H1 (cell line): ENCODE measurements at regions of chr14 and their contacts with region 1.

Region 1: DNA sequence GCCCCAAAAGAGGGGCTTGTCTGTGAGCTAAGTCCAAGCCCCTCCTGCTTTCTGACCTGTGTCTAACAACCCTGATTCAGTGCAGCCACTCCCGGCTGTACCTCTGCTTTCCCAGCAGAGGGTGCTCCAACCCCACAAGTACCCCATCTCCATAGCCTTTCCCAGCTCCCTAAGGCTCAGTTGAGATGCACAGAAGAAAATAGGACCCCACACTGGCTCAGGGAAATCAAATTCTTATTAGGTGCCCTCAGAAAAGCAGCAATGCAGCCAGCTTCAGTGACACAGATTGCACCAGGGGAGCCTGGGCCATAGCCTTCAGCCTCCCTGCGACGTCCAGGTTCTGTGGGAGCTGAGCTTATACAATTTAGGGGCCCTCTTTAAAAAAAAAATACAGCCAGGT is 49.9 kb downstream of the LRRC74A start:
- DNase-seq: peak; percentile 23 to 76
- H3K4me3 ChIP-seq: no peak overlapping the region
- H3K27ac ChIP-seq: no peak overlapping the region
- H3K4me1 ChIP-seq: peaks cover 0 to 3% (median 0%) of the 10 kb centered on the region in 4 experiments; a peak in 1 of 7 replicates
- H3K27me3 ChIP-seq: no peaks in the 10 kb centered on the region; a peak in 2 of 7 replicates
- CTCF ChIP-seq: peak; percentile 97
- EP300 ChIP-seq: no peak
- POLR2A ChIP-seq: no peak
- RAD21 ChIP-seq: peak; percentile 100

Region 2: DNA sequence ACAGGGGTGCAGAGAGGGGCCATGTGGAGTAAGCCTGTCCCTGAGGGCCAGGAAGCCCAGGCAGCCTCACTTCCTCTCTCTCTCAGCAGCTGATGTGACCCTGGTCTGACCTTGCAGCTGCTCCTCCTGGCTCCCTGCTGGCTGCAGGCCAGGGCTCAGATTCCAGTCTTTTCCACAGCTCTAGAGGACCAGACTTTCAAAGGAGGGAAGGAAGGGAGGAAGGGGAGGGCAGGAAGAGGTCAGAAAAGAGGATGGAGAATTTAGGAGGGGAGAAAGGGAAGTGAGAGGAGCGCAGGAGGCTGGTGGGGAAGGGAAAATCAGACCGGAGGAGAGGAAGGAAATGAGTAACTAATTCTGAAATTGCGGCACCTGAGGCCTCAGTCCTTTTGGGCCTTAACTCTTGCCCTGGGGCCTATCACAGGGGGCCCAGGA is 155.7 kb before region 1 on chr14:
- CTCF ChIA-PET with region 1: no interaction called
- POLR2A ChIA-PET with region 1: no interaction called
- DNase-seq: no peak
- H3K4me3 ChIP-seq: no peak overlapping the region
- H3K27ac ChIP-seq: no peak overlapping the region
- H3K4me1 ChIP-seq: peaks cover 0 to 8% (median 3%) of the 10 kb centered on the region in 4 experiments; a peak in 3 of 7 replicates
- H3K27me3 ChIP-seq: no peaks in the 10 kb centered on the region
- CTCF ChIP-seq: no peak
- EP300 ChIP-seq: no peak
- POLR2A ChIP-seq: no peak
- RAD21 ChIP-seq: no peak

Region 3: GRCh38 chr14:76904740-76905438 is 28.8 kb after region 1 on chr14:
- CTCF ChIA-PET with region 1: interaction called, 424 read pairs
- POLR2A ChIA-PET with region 1: interaction called, 3 read pairs
- DNase-seq: no peak
- H3K4me3 ChIP-seq: no peak overlapping the region
- H3K27ac ChIP-seq: no peak overlapping the region
- H3K4me1 ChIP-seq: peaks cover 0 to 3% (median 1%) of the 10 kb centered on the region in 4 experiments; a peak in 1 of 7 replicates
- H3K27me3 ChIP-seq: no peaks in the 10 kb centered on the region
- CTCF ChIP-seq: no peak
- EP300 ChIP-seq: no peak
- POLR2A ChIP-seq: no peak
- RAD21 ChIP-seq: no peak

Region 4: GRCh38 chr14:76968621-76969063 is 92.6 kb after region 1 on chr14:
- CTCF ChIA-PET with region 1: interaction called, 15 read pairs
- POLR2A ChIA-PET with region 1: no interaction called
- DNase-seq: no peak
- H3K4me3 ChIP-seq: no peak overlapping the region
- H3K27ac ChIP-seq: peak overlapping the region; percentile 56; the same call in 1 of the 2 replicates
- H3K4me1 ChIP-seq: peaks cover 0 to 33% (median 17%) of the 10 kb centered on the region in 4 experiments; a peak in 6 of 7 replicates
- H3K27me3 ChIP-seq: no peaks in the 10 kb centered on the region
- CTCF ChIP-seq: peak in 2 of 3 experiments; percentile 23 to 25; a peak in 2 of 4 replicates
- EP300 ChIP-seq: no peak
- POLR2A ChIP-seq: no peak
- RAD21 ChIP-seq: peak; percentile 26 to 41; a peak in 3 of 4 replicates

Region 5: GRCh38 chr14:77028384-77029231 is 152.5 kb after region 1 on chr14 and contains the start of gene IRF2BPL:
- CTCF ChIA-PET with region 1: interaction called, 13 read pairs
- POLR2A ChIA-PET with region 1: interaction called, 4 read pairs
- DNase-seq: peak in 1 of 2 experiments; percentile 88
- H3K4me3 ChIP-seq: peak within 1 kb of the TSS; percentile 61 to 86 (median 70)
- H3K27ac ChIP-seq: peak within 1 kb of the TSS; percentile 91
- H3K4me1 ChIP-seq: peaks cover 6 to 40% (median 27%) of the 10 kb centered on the region in 4 experiments
- H3K27me3 ChIP-seq: peaks cover 0 to 5% (median 3%) of the 10 kb centered on the region in 4 experiments; a peak in 5 of 7 replicates
- CTCF ChIP-seq: no peak
- EP300 ChIP-seq: 0 out of 3 replicates have a peak, but pooled peaks of 1 of the 2 experiments have one; percentile 42
- POLR2A ChIP-seq: peak in 1 of 2 experiments; percentile 85; a peak in 2 of 3 replicates
- RAD21 ChIP-seq: peak; percentile 0 to 1; a peak in 2 of 4 replicates
- total RNA-seq, gene IRF2BPL: 57.0 and 59.6 TPM in 2 replicates

Region 6: DNA sequence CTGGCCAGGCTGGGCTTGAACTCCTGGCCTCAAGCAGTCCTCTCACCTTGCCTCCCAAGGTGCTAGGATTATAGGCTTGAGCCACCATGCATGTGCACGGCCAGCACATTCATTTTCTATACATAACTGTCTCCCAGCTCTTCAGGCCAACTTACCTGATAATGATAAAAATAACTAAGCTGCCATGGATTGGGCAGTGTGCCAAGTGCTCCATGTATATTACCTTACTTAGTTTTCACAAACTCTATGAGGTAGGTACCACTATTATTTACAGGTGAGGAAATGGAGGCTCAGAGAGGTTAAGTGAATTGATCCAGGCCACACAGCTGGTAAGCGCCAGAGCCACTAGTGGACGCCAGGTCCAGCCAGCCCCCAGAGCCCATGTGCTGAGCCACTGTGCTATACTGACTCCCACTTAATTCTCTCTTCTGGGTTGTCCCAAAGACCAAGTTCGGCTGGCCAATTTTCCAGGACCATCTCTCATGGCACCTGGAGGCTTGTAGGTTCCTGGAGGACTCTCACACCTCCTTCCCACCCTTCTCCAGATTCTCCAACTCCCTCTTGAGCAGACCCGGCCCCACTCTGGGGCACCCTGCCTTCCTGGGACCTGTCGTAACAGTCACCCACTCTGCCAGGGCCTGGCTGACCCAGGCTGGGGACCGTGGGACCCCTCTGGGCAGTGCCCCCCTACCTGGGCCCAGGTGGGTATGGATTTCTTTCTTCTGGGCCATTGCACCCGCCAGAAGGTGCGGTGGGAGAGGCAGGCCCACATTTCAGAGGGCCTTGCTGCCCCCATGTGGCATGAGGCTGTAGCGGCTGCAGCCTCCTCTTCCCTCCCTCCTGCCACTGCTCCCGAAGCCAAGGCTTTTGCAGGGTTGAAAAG is 191.8 kb after region 1 on chr14:
- CTCF ChIA-PET with region 1: interaction called, 719 read pairs
- POLR2A ChIA-PET with region 1: interaction called, 3 read pairs
- DNase-seq: peak; percentile 62 to 85
- H3K4me3 ChIP-seq: no peak overlapping the region
- H3K27ac ChIP-seq: no peak overlapping the region
- H3K4me1 ChIP-seq: peaks cover 0 to 3% (median 1%) of the 10 kb centered on the region in 4 experiments; a peak in 4 of 7 replicates
- H3K27me3 ChIP-seq: no peaks in the 10 kb centered on the region
- CTCF ChIP-seq: peak; percentile 94 to 98 (median 95)
- EP300 ChIP-seq: no peak
- POLR2A ChIP-seq: no peak
- RAD21 ChIP-seq: peak; percentile 98 to 99

Region 7: GRCh38 chr14:77212943-77213678 is 337.0 kb after region 1 on chr14:
- CTCF ChIA-PET with region 1: interaction called, 13 read pairs
- POLR2A ChIA-PET with region 1: no interaction called
- DNase-seq: peak; percentile 38 to 90
- H3K4me3 ChIP-seq: no peak overlapping the region
- H3K27ac ChIP-seq: no peak overlapping the region
- H3K4me1 ChIP-seq: peaks cover 0 to 6% (median 3%) of the 10 kb centered on the region in 4 experiments; a peak in 5 of 7 replicates
- H3K27me3 ChIP-seq: no peaks in the 10 kb centered on the region
- CTCF ChIP-seq: peak; percentile 82 to 92 (median 90)
- EP300 ChIP-seq: no peak
- POLR2A ChIP-seq: no peak
- RAD21 ChIP-seq: peak; percentile 82 to 86